ENCODE measurements at regions of chr17 and their contacts with region 1.

Region 1: DNA sequence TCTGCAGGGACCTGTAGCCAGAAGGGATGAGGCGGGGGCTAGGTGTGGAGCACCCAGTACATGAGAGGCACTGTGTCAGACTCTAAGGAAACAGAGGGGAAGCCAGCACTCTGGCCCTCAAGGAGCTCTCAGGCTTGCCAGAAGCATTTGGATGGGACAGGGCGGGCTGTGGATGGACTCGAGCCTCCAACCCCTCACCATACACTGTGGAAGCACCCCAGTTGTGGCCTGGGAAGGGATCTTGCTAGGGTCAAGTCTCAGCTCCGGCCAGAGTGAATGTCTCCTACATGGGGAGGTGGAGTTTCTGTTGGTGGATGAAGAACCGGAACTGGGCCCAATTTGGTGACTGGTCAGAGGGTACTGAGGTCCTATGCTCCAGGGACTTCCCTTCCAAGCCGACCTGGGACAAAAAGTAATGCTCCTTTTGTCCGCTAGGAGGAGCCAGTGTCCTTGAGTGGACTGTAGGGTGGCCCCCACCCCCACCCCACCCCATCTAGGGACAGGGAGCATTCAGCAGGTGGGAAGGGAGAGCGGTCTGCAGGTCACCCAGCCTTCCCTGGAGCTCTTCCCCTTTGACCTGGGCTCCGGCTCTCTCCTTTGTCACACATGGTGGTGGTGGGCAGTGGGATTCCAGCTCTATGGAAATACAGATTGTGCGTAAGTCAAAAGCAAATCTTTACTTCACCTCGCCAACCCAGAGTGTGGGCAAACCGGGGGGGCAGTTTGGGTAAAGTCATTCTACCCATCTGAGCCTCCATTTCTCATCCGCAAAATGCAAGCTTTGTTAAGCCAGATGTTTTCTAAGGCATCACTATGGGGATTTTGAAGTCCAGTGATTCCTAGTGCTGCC is 20.4 kb upstream of the PHB1 start:
- DNase-seq: peak; percentile 38 to 87
- H3K4me3 ChIP-seq: no peak overlapping the region
- H3K27ac ChIP-seq: no peak overlapping the region
- H3K4me1 ChIP-seq: peaks cover 0 to 26% (median 12%) of the 10 kb centered on the region in 4 experiments; a peak in 6 of 7 replicates
- H3K27me3 ChIP-seq: peaks cover 0 to 15% (median 4%) of the 10 kb centered on the region in 4 experiments; a peak in 3 of 7 replicates
- CTCF ChIP-seq: peak; percentile 78 to 86 (median 82)
- EP300 ChIP-seq: no peak; a peak in 1 of 3 replicates
- POLR2A ChIP-seq: no peak
- RAD21 ChIP-seq: peak; percentile 88 to 90

Region 2: GRCh38 chr17:49327835-49328784 is 106.9 kb before region 1 on chr17:
- CTCF ChIA-PET with region 1: no interaction called
- POLR2A ChIA-PET with region 1: no interaction called
- DNase-seq: no peak
- H3K4me3 ChIP-seq: no peak overlapping the region
- H3K27ac ChIP-seq: no peak overlapping the region
- H3K4me1 ChIP-seq: peaks cover 0 to 5% (median 0%) of the 10 kb centered on the region in 4 experiments; a peak in 3 of 7 replicates
- H3K27me3 ChIP-seq: no peaks in the 10 kb centered on the region
- CTCF ChIP-seq: no peak
- EP300 ChIP-seq: no peak
- POLR2A ChIP-seq: no peak
- RAD21 ChIP-seq: no peak

Region 3: DNA sequence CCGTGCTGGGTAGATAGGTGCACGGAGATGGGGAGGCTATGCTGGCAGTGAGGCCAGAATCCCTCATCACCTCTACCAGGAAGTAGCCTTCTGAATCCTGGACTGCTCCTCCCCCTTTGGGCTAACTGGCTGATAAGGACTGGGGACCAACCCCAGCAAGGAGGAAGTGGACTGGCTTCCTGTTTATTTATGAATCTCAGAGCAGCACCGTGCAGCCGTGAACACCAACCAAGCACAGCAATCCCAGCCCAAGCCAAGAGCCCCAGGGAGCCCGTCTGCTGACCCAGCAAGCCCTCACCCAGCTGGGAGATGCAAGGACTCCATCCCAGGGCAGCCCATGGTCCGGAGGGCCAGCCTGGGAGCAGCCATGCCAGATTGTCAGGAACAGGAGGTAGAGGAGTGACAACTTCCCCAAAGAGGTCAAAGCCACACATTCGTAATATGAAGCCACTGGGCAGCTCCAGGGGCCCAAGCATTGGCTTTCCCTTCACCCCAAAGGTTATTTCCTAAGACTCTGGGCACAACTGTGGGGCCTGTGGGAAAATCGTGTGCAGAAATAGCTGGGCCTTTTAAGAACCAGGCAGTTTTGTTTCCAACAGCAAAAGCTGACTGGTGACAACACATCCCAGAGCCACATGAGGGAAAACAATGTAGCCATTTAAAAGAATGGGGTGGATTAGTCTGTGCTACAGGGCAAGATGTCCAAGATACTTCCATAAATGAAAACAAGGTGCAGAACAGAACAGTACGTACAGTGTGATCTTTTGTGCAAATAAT is 44.3 kb before region 1 on chr17:
- CTCF ChIA-PET with region 1: no interaction called
- POLR2A ChIA-PET with region 1: no interaction called
- DNase-seq: no peak
- H3K4me3 ChIP-seq: no peak overlapping the region
- H3K27ac ChIP-seq: no peak overlapping the region
- H3K4me1 ChIP-seq: no peaks in the 10 kb centered on the region
- H3K27me3 ChIP-seq: no peaks in the 10 kb centered on the region
- CTCF ChIP-seq: no peak
- EP300 ChIP-seq: no peak
- POLR2A ChIP-seq: no peak
- RAD21 ChIP-seq: no peak

Region 4: GRCh38 chr17:49414622-49415350 is 20.3 kb before region 1 on chr17 and contains the start of gene PHB1:
- CTCF ChIA-PET with region 1: interaction called, 43 read pairs
- POLR2A ChIA-PET with region 1: interaction called, 5 read pairs
- DNase-seq: peak; percentile 90 to 95
- H3K4me3 ChIP-seq: peak within 1 kb of the TSS; percentile 92 to 99 (median 96)
- H3K27ac ChIP-seq: no peak within 1 kb of the TSS
- H3K4me1 ChIP-seq: no peaks in the 10 kb centered on the region
- H3K27me3 ChIP-seq: no peaks in the 10 kb centered on the region
- CTCF ChIP-seq: no peak
- EP300 ChIP-seq: no peak
- POLR2A ChIP-seq: peak in 1 of 2 experiments; percentile 46; a peak in 1 of 3 replicates
- RAD21 ChIP-seq: no peak
- total RNA-seq, gene PHB1: 386 and 401 TPM in 2 replicates

Region 5: DNA sequence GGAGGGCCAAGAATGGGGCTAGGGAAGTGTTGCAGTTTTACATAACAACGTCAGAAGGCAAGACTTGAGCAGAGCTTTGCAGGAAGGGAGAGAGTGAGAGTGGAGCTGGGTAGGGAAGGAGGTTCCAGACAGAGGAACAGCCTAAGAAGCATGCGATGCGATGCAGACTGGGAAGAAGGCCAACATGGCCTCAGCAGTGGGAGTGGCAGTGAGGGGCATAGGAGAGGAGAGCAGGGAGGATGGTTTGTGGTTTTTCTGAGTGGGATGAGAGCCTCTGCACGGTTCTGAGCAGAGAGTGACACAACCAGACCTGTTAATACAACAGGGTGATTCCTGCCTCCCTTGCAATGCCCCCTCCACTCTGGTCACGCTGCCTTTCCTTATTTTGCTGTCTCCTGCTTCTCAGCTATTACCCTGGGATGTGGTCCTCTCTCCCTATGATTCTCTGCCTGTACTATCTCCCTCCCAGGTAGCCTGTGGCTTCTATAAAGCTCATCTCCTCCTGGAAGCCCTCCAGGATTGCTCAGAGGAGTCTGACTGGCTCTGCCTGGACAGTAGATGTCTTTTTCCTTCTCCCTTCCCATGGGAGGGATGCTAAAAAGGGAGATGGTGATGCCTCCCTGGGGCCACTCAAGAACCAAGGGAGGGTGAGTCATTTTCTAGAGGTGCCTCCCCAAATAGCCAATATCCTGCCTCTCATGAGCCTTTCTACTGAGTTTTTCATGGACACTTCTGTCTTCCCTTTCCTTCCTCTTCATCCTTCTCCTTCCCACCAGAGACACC is 21.3 kb after region 1 on chr17:
- CTCF ChIA-PET with region 1: interaction called, 111 read pairs
- POLR2A ChIA-PET with region 1: interaction called, 6 read pairs
- DNase-seq: no peak
- H3K4me3 ChIP-seq: no peak overlapping the region
- H3K27ac ChIP-seq: no peak overlapping the region
- H3K4me1 ChIP-seq: peaks cover 0 to 19% (median 3%) of the 10 kb centered on the region in 4 experiments; a peak in 4 of 7 replicates
- H3K27me3 ChIP-seq: peaks cover 0 to 3% (median 0%) of the 10 kb centered on the region in 4 experiments; a peak in 1 of 7 replicates
- CTCF ChIP-seq: no peak
- EP300 ChIP-seq: no peak
- POLR2A ChIP-seq: no peak
- RAD21 ChIP-seq: no peak

Region 6: DNA sequence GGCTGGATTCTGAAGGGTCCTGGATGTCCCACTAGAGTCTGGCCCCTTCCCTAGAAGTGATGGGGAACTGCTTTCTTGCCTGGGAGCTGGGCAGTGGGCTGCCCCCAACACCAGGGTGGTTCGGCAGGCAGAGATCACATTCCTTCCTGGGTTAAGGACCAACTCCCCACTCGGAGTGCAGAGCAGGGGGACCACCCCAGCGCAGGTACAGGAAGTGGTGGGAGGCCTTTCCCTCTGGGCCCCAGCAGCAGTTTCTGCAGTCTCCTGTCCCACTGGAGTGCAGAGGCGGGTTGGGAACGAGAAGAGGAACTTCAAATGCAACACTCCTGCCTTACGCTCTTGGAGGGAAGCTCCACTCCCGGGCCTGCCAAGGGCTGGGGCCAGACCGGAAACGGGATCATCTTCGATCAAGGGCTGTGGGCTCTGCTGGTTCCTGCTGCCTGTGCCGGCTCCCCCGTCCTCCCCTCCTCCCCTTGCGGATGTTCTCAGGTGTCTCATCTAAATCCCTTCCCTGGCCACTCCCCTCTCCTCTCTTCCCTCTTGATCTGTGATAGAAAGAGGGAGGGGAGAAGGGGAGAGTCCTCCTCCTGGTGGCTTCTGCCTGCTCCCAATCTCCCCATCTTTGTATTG is 51.1 kb after region 1 on chr17:
- CTCF ChIA-PET with region 1: interaction called, 34 read pairs
- POLR2A ChIA-PET with region 1: interaction called, 4 read pairs
- DNase-seq: peak; percentile 75 to 82
- H3K4me3 ChIP-seq: peak overlapping the region; percentile 1 to 46 (median 22); a peak in 5 of 8 replicates
- H3K27ac ChIP-seq: peak overlapping the region; percentile 43; the same call in 1 of the 2 replicates
- H3K4me1 ChIP-seq: peaks cover 7 to 30% (median 22%) of the 10 kb centered on the region in 4 experiments
- H3K27me3 ChIP-seq: no peaks in the 10 kb centered on the region; a peak in 2 of 7 replicates
- CTCF ChIP-seq: no peak
- EP300 ChIP-seq: no peak
- POLR2A ChIP-seq: peak in 1 of 2 experiments; percentile 80; a peak in 2 of 3 replicates
- RAD21 ChIP-seq: no peak

Region 7: GRCh38 chr17:49508061-49508865 is 73.2 kb after region 1 on chr17:
- CTCF ChIA-PET with region 1: interaction called, 105 read pairs
- POLR2A ChIA-PET with region 1: no interaction called
- DNase-seq: peak; percentile 83 to 97
- H3K4me3 ChIP-seq: peak overlapping the region; percentile 22 to 51 (median 34); a peak in 5 of 8 replicates
- H3K27ac ChIP-seq: peak overlapping the region; percentile 58; the same call in 1 of the 2 replicates
- H3K4me1 ChIP-seq: peaks cover 6 to 40% (median 22%) of the 10 kb centered on the region in 4 experiments
- H3K27me3 ChIP-seq: peaks cover 0 to 2% (median 0%) of the 10 kb centered on the region in 4 experiments; a peak in 1 of 7 replicates
- CTCF ChIP-seq: no peak
- EP300 ChIP-seq: no peak
- POLR2A ChIP-seq: peak in 1 of 2 experiments; percentile 48; a peak in 1 of 3 replicates
- RAD21 ChIP-seq: no peak

Region 8: DNA sequence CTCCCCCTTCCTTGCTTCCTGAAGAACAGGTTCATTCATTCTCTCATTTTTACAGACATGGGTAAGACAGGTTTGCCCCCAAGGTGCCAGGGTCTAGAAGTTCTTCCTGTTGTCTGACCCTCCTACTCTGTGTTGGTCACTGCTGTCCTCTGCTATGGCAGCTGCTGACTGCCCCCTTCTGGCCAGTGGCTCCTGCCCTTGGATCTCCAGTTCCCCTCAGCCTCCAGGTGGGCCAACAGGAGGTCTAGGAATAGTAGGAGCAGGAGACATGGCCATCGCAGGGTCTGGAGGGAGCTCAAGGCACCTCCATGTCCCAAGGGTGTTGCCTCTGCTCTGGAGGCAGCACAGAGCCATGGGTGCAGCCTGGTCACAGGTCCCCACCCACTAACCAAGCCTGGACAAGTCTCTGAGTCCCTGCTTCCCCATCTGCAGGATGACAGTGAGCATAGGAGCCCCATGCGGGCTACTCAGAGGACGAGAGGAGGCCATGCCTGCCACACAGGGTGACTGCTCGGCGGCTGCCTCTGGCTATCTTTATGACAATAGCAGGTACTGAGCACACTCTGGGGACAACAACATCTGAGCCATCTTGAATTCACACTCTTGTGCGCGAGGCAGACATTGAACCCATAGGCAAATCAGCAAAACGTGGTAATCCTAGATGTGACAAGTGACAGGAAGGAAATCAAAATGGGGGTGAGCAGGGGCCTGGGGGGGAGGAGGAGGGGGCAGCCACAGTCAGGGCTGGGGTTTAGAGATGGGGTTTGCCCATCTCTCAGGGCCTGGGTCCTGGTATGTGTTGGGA is 113.7 kb after region 1 on chr17:
- CTCF ChIA-PET with region 1: interaction called, 107 read pairs
- POLR2A ChIA-PET with region 1: interaction called, 3 read pairs
- DNase-seq: peak in 1 of 2 experiments; percentile 85
- H3K4me3 ChIP-seq: no peak overlapping the region
- H3K27ac ChIP-seq: no peak overlapping the region
- H3K4me1 ChIP-seq: peaks cover 0 to 26% (median 14%) of the 10 kb centered on the region in 4 experiments; a peak in 6 of 7 replicates
- H3K27me3 ChIP-seq: no peaks in the 10 kb centered on the region
- CTCF ChIP-seq: peak; percentile 93 to 96 (median 94)
- EP300 ChIP-seq: no peak
- POLR2A ChIP-seq: no peak
- RAD21 ChIP-seq: peak; percentile 91 to 95

Measured in H1 (cell line).